Breast epithelium (tissue), 4 donors: ENCODE measurements at regions of chr6 and their contacts with region 1.

Region 1: DNA sequence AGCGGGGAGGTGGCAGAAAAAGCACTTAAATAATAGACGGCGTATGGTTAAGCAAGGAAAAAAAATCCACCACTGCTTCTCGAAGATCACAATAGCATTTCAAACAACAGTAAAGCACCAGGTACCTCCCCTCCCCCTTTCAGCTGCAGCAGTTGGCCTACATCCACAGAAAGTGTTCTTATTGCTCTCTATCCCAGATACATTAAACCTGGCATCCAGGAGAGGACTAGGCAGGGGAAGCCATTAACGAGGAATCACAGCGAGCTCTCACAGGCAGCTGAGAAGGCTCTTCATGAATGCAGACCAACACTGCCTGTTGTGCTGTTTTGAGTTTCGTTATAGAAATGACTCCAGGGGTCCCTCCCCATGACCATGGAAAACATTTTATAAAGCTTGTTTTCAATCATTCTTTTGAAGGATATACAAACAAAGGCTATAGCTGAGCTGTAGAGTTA is 11.8 kb downstream of the FYN start:
- DNase-seq: no peak
- H3K4me3 ChIP-seq: no peak overlapping the region
- H3K27ac ChIP-seq: no peak overlapping the region
- H3K4me1 ChIP-seq: no peaks in the 10 kb centered on the region
- H3K27me3 ChIP-seq: no peaks in the 10 kb centered on the region
- CTCF ChIP-seq: no peak
- POLR2A ChIP-seq: no peak

Region 2: GRCh38 chr6:111503207-111503606 is 358.3 kb before region 1 on chr6:
- intact Hi-C with region 1: no loop called
- DNase-seq: no peak
- H3K4me3 ChIP-seq: no peak overlapping the region
- H3K27ac ChIP-seq: no peak overlapping the region
- H3K4me1 ChIP-seq: no peaks in the 10 kb centered on the region
- H3K27me3 ChIP-seq: no peaks in the 10 kb centered on the region
- CTCF ChIP-seq: no peak
- POLR2A ChIP-seq: no peak

Region 3: DNA sequence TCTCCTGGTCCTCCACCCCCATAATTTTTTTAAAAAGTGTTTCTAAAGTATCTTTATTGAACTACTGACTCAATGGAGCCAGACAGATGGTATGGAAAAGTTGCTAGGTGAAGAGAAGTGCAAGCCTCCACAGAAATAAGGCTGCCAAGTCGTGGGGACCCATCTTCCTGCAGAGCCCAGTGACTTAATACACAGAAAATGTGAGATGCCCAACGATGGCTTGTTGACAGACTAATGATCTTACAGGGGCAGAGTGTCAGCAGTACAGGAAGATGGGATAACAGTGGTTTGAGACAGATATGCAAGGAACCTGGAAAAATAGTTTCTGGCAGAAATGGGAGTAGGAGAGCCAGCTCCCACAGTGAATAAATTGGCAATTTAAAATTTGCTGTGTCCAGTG is 31.5 kb before region 1 on chr6:
- intact Hi-C with region 1: loop called (anchors 1 kb)
- DNase-seq: no peak
- H3K4me3 ChIP-seq: no peak overlapping the region
- H3K27ac ChIP-seq: no peak overlapping the region
- H3K4me1 ChIP-seq: no peaks in the 10 kb centered on the region
- H3K27me3 ChIP-seq: no peaks in the 10 kb centered on the region
- CTCF ChIP-seq: no peak
- POLR2A ChIP-seq: no peak